Pancreas (tissue), 10 donors: ENCODE measurements at regions of chr11 and their contacts with region 1.

Region 1: GRCh38 chr11:22666688-22667439 is 453 bp downstream of the GAS2 start:
- DNase-seq: peak; percentile 64 to 89 (median 74)
- ATAC-seq: peak; percentile 83 to 89 (median 86)
- H3K4me3 ChIP-seq: peak overlapping the region; percentile 34 to 60 (median 55)
- H3K27ac ChIP-seq: peak overlapping the region; percentile 75 to 89 (median 82)
- H3K4me1 ChIP-seq: peaks cover under 1 to 14% (median 9%) of the 10 kb centered on the region in 3 donors
- H3K27me3 ChIP-seq: no peaks in the 10 kb centered on the region
- CTCF ChIP-seq: peak in 1 of 4 donors; percentile 19

Region 2: DNA sequence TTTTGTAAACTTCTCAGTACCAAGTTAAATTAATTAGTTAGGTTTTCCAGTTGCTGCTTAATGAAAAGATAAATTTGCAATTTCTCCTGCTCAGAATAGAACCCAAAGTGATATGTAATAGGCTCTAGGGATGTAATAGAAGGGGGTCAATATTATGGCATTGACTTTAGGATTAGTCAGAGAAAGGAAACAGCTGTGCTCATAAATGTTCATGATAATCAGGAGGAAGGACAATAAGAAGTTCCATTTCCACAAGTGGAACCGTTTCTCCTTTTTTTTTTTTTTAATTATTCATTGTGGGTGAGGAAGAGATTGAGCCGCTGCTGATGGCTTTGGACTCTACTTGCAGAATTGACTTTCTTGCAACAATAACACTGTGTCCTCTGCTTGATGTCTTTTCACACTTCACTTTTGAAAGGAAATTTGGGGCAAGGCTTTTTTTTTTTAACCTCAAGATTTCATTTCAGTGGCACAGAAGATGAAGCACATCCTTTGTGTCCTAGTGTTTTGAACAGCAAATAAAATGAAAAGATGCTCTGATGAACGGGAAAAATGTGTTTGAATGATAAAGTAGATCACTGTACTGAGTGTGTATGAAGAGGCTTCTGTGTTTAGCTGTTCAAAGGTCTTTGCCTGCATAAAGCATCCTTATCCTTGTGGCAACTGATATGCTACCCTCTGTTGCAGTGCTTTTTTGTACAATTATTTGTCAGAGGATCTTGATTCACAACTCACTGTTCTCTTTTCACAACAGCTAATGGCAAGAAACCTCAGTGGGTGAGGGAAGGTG is 61.9 kb after region 1 on chr11:
- intact Hi-C with region 1: loop called in 1 of 3 experiments (anchors 10 kb)
- DNase-seq: no peak
- ATAC-seq: peak in 3 of 4 donors; percentile 35 to 44 (median 43)
- H3K4me3 ChIP-seq: no peak overlapping the region
- H3K27ac ChIP-seq: no peak overlapping the region
- H3K4me1 ChIP-seq: peaks cover 3 to 14% (median 12%) of the 10 kb centered on the region in 3 donors
- H3K27me3 ChIP-seq: no peaks in the 10 kb centered on the region
- CTCF ChIP-seq: no peak